PC-3 (cell line): ENCODE measurements at regions of chr21 and their contacts with region 1.

Region 1: DNA sequence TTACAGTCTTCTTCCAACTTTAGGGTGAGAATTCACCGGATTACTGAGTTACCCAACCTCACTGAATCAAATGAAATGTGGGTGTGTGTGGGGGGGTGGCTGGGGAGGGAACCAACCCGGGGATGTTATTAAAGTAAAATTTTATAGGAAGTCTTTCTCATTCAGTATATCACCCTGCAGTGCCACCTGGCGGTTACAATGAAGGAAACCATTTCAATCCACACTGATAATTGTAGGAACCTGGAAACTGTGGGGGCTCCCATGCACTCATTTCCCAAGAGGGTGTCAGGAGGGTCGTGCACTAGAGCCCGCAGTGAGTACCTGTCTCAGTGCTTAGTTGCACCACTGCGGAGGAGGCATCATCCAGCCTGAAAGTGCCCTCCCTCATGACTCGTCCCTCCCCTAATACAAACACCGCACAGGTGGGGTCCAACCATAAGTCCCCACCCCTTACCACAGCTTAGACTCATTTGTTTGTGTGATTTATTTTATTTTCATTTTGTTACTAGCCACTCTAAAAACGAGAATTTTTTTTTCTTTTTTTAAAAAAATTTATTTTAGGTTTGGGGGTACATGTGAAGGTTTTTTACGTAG is 29.1 kb upstream of the IGSF5 start:
- DNase-seq: peak; percentile 70
- ATAC-seq: peak; percentile 63
- H3K4me3 ChIP-seq: no peak overlapping the region
- H3K27ac ChIP-seq: no peak overlapping the region
- H3K4me1 ChIP-seq: no peaks in the 10 kb centered on the region
- H3K27me3 ChIP-seq: no peaks in the 10 kb centered on the region
- CTCF ChIP-seq: peak; percentile 82

Region 2: DNA sequence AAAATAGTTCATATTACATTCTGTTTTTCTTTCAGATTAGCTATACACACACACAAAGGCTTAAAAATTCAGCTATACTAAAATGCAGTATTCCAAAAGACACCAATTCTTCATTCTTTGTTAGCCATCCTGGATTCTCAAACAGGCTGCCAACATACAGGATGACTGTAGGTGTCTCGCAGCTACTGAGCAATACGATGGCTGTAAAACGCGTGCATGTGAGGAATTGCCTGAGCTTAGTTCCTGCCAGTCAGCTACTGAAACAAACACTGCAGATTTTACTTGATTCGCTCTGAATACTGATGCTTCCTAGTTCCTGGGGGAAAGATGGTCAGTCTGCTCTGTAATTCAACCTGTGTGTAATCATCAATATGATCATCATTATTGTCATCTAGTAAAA is 342.3 kb before region 1 on chr21:
- CTCF ChIA-PET with region 1: no interaction called
- POLR2A ChIA-PET with region 1: no interaction called
- intact Hi-C with region 1: loop called (anchors 2 kb)
- DNase-seq: peak; percentile 73
- ATAC-seq: peak; percentile 96
- H3K4me3 ChIP-seq: peak overlapping the region; percentile 31; the same call in 1 of the 2 replicates
- H3K27ac ChIP-seq: no peak overlapping the region
- H3K4me1 ChIP-seq: peaks cover 7% of the 10 kb centered on the region; the same call in 1 of the 2 replicates
- H3K27me3 ChIP-seq: no peaks in the 10 kb centered on the region
- CTCF ChIP-seq: peak; percentile 67

Region 3: GRCh38 chr21:39763255-39763945 is 47.5 kb after region 1 on chr21:
- CTCF ChIA-PET with region 1: no interaction called
- POLR2A ChIA-PET with region 1: no interaction called
- intact Hi-C with region 1: no loop called
- DNase-seq: no peak
- ATAC-seq: no peak
- H3K4me3 ChIP-seq: no peak overlapping the region
- H3K27ac ChIP-seq: no peak overlapping the region
- H3K4me1 ChIP-seq: no peaks in the 10 kb centered on the region
- H3K27me3 ChIP-seq: peaks cover 5% of the 10 kb centered on the region; the same call in 1 of the 2 replicates
- CTCF ChIP-seq: no peak